Aorta (tissue), 5 donors: ENCODE measurements at regions of chr17 and their contacts with region 1.

Region 1: GRCh38 chr17:59311130-59311920 is 20.1 kb upstream of the YPEL2 start:
- DNase-seq: no peak
- ATAC-seq: peak; percentile 89
- H3K4me3 ChIP-seq: no peak overlapping the region
- H3K27ac ChIP-seq: no peak overlapping the region
- H3K4me1 ChIP-seq: peaks cover 0 to 2% of the 10 kb centered on the region in 2 donors
- H3K27me3 ChIP-seq: no peaks in the 10 kb centered on the region

Region 2: GRCh38 chr17:59110973-59111938 is 200.1 kb before region 1 on chr17:
- intact Hi-C with region 1: no loop called
- DNase-seq: no peak
- ATAC-seq: no peak
- H3K4me3 ChIP-seq: no peak overlapping the region
- H3K27ac ChIP-seq: no peak overlapping the region
- H3K4me1 ChIP-seq: no peaks in the 10 kb centered on the region
- H3K27me3 ChIP-seq: no peaks in the 10 kb centered on the region

Region 3: DNA sequence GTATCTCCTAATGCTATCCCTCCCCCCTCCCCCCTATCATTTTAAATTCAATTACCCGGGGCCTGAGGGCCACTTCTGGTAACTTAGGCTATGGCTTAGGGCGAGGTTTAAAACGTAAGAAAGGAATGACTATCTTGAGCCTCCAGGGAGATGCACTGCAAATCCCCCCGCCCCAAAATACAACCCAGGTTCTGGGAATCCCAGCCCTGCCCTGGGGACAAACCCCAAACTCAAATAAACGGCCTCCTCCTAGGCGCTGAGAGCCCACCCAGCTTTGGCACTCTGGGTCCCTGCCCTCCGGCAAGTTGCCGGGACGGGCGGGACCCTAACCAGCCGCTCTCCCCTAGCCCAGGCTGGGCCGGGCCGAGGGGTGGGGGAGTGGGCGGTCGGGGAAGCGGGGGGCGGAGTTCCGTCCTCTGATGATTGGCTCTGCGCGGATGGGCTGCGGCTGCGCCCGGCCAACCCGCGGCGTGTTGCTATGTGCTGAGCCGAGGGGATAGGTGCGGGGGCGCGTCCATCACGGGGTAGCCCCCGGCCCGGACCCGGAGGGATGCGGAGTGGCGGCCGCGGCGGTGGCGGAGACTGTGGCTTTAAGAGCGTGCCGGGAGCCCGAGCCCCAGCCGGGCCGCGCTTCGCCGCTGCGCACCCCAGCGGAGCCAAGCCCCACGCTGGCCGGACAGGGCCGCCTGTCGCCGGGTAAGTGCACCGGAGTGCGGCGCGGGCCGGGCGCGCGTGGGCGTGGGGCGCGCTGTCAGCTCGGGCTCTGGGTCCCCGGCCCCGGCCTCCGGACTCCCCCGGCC is 20.0 kb after region 1 on chr17 and contains the start of gene YPEL2:
- intact Hi-C with region 1: loop called in 1 of 2 experiments (anchors 2 kb)
- DNase-seq: peak; percentile 98 to 99
- ATAC-seq: peak; percentile 94
- H3K4me3 ChIP-seq: peak within 1 kb of the TSS; percentile 81 to 97
- H3K27ac ChIP-seq: peak within 1 kb of the TSS; percentile 96 to 100
- H3K4me1 ChIP-seq: peaks cover 10 to 15% of the 10 kb centered on the region in 2 donors
- H3K27me3 ChIP-seq: no peaks in the 10 kb centered on the region
- total RNA-seq, gene YPEL2: 38.5 to 54.0 TPM

Region 4: DNA sequence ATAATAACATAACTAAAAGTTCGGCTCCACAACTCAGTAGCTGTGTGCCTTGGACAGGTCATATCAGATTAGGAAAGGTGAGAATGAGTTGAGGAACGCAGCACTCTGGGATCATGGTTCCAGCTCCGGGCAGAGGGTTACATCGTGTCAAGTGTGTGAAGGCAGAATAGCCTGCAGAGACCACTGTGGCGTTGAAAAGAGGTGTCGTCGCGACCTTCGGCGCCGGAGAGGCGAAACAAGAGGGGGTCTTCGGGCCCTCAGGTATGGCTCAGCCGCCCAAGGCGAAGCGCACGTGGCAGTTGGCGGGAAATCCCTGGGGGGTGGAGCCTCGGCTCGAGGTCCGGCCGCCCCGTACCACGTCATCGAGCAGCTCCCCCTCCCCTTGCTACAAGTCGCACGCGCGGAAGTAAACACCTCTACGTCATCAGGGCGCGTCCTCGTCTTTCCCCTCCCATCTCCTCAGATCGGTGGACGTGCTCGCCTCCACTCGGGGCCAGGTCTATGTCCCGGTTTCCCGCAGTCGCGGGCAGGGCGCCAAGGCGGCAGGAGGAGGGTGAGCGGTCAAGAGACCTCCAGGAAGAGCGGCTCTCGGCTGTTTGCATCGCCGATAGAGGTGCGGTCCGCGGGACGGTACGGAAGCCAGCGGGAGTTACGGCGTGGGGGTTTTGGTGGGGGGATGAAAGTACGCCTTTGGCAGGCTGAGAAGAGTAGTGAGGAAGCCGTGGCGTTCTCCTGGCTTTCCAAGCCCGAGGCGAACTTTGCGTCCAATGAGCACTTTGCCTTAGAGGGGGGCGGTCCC is 254.0 kb after region 1 on chr17 and contains the start of gene DHX40:
- intact Hi-C with region 1: loop called in 1 of 2 experiments (anchors 5 kb)
- DNase-seq: peak; percentile 97 to 98
- ATAC-seq: peak; percentile 98
- H3K4me3 ChIP-seq: peak within 1 kb of the TSS; percentile 68 to 92
- H3K27ac ChIP-seq: peak within 1 kb of the TSS in 1 of 2 donors; percentile 85
- H3K4me1 ChIP-seq: no peaks in the 10 kb centered on the region
- H3K27me3 ChIP-seq: no peaks in the 10 kb centered on the region
- total RNA-seq, gene DHX40: 29.3 to 34.0 TPM